GM13977 (cell line): ENCODE measurements at regions of chr19 and their contacts with region 1.

Region 1: GRCh38 chr19:9934132-9934950 is 2.0 kb downstream of the OLFM2 start:
- DNase-seq: peak; percentile 91
- CTCF ChIP-seq: peak; percentile 97

Region 2: DNA sequence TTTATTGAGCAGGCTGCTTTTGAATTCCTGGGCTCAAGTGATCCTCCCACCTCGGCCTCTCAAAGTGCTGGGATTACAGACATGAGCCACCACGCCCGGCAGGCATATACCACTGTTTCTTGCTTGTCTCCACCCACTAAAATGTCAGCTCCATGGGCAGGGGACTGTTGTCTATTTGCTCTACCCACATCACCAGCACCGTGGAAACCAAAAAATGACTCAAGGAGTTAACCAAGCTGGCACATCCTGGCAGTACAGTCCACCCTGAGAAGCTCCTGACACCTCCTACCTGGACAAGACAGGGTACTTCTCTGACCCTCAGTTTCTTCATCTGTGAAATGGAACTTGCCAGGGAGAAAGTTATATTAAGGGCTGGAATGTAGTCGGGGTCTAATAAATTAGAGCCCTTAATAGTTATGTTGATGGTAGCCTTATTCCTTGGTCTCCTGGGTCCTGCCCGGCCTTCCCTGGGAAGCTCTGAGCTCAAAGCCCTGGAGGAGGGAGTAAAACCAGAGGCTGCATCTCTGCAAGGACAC is 92.9 kb after region 1 on chr19:
- in situ Hi-C with region 1: loop called (anchors 10 kb)
- DNase-seq: peak; percentile 46
- CTCF ChIP-seq: no peak

Region 3: DNA sequence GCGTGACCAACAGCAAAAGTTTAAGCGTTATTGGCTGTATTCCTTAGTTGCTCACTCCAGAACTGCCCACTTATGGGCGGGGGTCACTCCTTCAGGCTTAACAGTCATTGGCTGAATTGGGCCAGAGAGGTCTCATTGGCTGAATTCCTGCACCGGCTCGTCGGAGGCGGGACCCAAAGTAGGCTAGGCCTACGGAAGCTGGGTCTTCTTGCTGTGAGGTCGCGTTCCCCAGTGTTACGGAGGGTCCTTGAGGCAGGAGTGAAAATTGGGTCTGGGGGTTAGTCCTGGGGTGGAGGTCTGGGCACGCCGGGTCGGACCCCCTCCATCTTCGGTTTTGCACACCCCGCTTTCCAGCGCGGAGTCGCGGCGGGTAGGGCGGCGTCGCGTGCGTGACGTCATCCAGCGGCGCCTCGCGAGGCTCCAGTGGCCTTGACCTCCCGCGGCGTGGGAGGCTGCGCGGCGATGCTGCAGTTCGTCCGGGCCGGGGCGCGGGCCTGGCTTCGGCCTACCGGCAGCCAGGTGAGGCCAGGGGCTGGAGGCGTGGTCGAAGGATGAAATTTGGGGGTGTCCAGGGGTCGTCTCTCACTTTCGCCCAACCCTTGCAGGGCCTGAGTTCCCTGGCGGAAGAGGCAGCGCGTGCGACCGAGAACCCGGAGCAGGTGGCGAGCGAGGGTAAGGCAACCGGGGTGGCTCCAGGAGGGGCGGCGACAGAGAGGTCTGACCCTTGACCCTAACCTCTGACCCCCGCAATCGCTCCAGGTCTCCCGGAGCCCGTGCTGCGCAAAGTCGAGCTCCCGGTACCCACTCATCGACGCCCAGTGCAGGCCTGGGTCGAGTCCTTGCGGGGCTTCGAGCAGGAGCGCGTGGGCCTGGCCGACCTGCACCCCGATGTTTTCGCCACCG is 317.7 kb after region 1 on chr19 and contains the start of gene MRPL4:
- in situ Hi-C with region 1: loop called (anchors 25 kb)
- DNase-seq: peak; percentile 95
- CTCF ChIP-seq: no peak